Colonic mucosa (tissue), 4 donors: ENCODE measurements at regions of chr9 and their contacts with region 1.

Region 1: DNA sequence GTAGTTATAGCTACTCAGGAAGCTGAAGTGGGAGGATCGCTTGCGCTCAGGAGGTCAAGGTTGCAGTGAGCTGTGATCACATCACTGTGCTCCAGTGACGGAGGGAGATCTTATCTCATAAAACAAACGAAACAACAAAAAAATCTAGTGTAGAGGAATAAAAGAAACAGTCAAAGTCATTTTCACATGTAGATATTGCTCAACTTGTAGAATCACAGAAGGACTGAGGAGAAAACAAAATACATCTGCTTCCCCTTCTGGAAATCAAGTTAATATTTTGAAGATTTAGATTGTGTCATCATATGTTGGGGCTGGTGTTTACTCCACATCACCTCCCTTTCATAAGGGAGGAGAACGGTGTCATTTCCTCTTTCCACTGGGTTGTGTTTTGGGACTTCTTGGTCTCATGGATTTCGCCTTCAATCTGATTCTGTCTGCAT is 8.2 kb upstream of the SLC46A2 start:
- DNase-seq: no peak
- H3K4me3 ChIP-seq: no peak overlapping the region
- H3K27ac ChIP-seq: no peak overlapping the region
- H3K4me1 ChIP-seq: no peaks in the 10 kb centered on the region
- H3K27me3 ChIP-seq: no peaks in the 10 kb centered on the region
- CTCF ChIP-seq: no peak

Region 2: DNA sequence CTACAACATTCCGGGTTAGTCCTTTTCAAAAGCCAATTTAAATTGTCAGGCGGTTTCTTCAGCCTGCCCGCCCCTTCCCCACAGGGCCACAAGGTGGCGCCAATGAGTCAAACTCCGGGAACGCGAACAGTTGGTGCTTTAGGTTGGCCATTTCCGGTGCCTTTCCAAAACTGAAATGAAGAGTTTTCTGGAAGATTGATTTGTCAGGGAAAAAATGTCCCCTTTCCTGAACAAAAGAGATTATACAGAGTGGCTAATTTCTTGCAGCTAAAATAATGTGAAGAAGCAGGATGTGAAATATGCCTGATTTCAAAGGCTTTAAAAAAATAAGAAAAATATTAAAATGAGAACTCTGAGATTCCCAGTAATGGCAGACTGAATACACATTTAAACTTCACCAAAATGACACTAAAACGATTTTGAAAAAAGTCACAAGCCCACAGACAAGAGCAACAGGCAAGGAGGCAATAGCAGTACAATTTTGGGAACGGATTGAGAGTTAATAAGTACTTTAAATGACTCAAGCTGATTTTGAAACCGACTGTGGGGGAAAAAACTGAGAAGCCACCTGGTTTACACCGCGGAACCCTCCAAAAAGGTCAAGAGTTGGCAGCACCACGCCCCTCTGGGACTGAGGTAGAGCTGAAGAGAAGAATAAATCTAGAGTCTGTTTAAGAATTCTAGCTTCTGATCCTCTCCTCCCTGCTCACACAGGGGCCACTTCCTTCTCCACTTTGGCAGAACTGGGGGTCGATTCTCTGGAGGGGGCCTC is 53.9 kb before region 1 on chr9:
- intact Hi-C with region 1: loop called (anchors 2 kb)
- DNase-seq: peak; percentile 89
- H3K4me3 ChIP-seq: no peak overlapping the region
- H3K27ac ChIP-seq: no peak overlapping the region
- H3K4me1 ChIP-seq: no peaks in the 10 kb centered on the region
- H3K27me3 ChIP-seq: no peaks in the 10 kb centered on the region
- CTCF ChIP-seq: peak; percentile 99